GM10248 (cell line): ENCODE measurements at regions of chr4 and their contacts with region 1.

Region 1: GRCh38 chr4:20395160-20395773 is 143.6 kb downstream of the SLIT2 start:
- DNase-seq: peak; percentile 7
- CTCF ChIP-seq: peak; percentile 64

Region 2: DNA sequence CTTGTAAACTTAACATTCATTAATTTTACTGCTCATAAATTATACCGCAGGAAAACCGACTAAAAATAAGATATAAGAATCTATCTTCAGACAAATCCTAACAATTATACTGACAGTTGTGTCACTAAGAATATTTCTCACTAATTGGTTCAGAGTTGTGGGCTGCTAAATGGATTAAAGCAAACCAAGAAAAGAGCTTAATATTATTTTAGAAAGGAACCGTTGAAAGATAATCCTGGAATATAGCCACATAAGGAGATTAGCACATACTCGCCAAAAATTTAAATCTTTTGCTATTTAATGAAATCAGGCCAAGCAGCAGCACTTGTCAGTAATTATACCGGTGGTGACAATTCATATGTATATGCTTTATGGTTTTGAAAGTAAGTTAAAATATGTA is 10.8 kb before region 1 on chr4:
- CTCF ChIA-PET with region 1: interaction called, 12 read pairs
- POLR2A ChIA-PET with region 1: no interaction called
- DNase-seq: no peak
- CTCF ChIP-seq: no peak

Region 3: DNA sequence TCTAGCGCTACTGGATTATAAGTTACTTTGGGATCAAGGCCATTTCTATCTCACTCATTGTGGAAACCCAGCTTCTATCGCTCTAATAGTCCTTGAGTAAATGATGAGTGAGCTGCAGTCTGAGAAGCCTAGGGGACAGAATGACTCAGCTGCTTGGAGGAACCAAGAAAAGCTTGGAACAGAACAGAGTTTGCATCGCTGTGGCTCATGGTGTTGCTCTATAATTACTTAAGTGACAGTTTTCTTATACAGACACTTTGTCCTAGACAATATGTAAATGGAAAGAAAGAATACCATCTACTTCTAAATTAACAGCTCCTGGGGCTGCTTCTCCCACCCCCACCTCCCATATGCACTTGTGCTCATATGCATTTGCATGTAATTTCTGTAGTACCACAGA is 13.3 kb after region 1 on chr4:
- CTCF ChIA-PET with region 1: interaction called, 18 read pairs
- POLR2A ChIA-PET with region 1: no interaction called
- DNase-seq: no peak
- CTCF ChIP-seq: no peak

Region 4: GRCh38 chr4:20432088-20432487 is 36.8 kb after region 1 on chr4:
- CTCF ChIA-PET with region 1: no interaction called
- POLR2A ChIA-PET with region 1: no interaction called
- DNase-seq: no peak
- CTCF ChIP-seq: no peak

Region 5: DNA sequence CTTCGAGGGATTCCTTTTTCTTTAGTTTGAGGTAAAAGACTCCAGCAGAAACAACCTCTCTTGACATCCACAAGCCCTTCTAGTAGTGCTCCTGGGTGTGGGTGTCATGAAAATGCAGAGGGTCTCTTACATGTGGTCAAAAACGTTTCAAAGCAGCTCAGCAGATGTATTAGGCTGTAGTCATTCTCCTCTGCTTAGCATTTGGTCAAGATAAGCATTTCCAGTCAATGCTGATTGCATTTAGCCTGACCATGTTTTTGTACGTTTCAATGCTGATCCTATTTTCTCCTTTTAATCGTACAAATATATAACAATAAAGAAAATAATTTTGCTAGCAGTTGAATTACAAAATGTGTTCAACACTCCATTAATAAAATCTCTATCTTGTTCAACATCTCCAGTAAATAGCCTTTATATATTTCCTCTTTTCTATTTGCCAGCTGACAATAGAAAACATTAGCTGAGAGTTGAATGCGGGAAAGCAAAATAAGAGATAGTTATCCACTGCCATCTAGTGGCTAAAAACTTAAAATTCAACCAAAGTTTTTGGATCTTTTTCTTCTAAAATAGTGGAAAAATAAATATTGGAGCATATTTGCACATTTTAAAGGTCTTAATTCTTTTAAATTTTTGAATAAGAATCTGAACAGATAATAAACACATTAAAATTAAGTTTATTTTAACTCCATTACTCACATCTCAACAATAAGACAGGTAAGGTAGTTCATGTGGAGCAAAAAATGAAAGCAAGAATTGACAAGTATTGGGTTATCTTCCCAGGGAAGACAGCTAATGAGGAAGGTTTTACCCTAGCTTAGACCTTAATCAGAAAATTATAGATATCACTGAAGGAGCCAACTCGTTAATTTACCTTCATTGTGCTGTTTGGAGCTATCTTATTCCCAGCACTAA is 289.8 kb after region 1 on chr4:
- CTCF ChIA-PET with region 1: interaction called, 13 read pairs
- POLR2A ChIA-PET with region 1: no interaction called
- DNase-seq: peak; percentile 24
- CTCF ChIP-seq: peak; percentile 42